ENCODE measurements at regions of chr1 and their contacts with region 1.

Region 1: DNA sequence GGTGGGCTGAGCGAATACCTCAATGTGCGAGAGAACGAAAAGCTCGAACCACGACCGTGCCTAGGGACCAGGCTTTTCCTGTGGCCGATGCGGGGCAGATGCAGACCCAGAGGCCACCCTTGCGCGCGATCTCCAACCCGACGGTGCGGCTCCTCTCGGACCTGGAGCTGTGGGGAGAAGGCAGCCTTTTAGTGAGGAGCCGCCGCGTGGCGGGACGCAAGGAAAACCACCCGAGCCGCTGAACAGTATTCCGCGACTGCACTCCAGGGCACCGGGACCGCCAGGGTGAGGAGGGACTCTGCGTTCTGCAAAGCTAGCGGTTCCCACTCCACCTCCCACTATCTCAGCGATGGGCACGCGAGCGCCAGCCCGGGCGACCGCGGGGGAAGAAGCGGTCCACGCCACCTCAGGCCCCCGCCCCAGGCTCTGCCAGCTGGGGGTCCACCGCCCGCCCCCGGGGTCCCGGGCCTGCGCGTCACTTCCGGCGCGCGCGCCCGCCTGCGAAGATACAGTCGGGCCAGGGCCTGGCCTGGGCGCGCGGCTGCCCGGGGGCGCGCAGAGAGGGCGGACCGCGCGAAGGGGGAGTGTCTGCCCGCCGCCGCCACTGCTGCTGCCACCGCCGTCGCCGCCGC is 66.5 kb upstream of the PRKACB start:
- DNase-seq: peak; percentile 75
- ATAC-seq: peak; percentile 91
- H3K4me3 Mint-ChIP-seq: peak overlapping the region; percentile 79
- H3K27ac Mint-ChIP-seq: peak overlapping the region; percentile 85
- H3K4me1 Mint-ChIP-seq: peaks cover 15% of the 10 kb centered on the region
- H3K27me3 Mint-ChIP-seq: no peaks in the 10 kb centered on the region

Region 2: GRCh38 chr1:83787246-83787998 is 290.2 kb before region 1 on chr1:
- CTCF ChIA-PET with region 1: no interaction called
- POLR2A ChIA-PET with region 1: no interaction called
- DNase-seq: no peak
- ATAC-seq: no peak
- H3K4me3 Mint-ChIP-seq: no peak overlapping the region
- H3K27ac Mint-ChIP-seq: no peak overlapping the region
- H3K4me1 Mint-ChIP-seq: no peaks in the 10 kb centered on the region
- H3K27me3 Mint-ChIP-seq: no peaks in the 10 kb centered on the region

Region 3: DNA sequence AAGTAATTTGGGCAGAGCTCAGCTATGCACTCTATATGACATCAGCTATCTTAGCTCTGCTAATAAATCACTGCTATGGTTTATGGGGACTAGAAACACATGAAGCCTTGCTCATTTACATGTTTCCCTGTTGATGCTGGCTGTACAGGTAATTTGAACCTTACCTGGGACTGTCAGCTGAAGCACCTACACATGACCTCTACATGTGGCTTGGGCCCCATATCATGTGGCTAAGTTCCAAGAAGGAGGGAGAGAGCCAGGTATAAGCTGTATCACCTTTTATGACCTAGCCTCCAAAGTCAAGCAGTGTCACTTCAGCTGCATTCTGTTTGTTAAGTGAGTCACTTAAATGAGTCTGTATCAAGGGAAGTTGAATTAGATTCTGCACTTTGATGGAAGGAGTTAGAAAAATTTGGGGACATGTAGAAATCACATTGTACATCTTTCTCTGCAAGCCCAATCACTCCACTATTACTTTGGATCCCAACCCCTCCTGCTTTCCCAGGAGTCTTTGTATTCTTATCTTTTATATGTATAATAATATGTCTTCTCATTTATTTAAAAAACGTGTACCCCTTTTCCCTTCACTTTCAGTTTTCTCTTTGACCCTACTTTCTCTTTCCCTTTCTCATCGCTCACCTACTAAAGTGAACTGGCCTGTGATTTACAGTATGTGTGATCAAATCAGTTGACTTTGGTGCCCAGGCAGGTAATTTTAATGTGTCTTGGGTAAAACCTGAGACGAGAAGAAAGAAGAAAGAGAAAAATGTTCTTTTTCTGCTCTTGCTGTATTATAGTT is 13.1 kb after region 1 on chr1:
- CTCF ChIA-PET with region 1: interaction called, 6 read pairs
- POLR2A ChIA-PET with region 1: interaction called, 13 read pairs
- DNase-seq: peak; percentile 27
- ATAC-seq: peak; percentile 87
- H3K4me3 Mint-ChIP-seq: peak overlapping the region; percentile 68
- H3K27ac Mint-ChIP-seq: peak overlapping the region; percentile 75
- H3K4me1 Mint-ChIP-seq: peaks cover 14% of the 10 kb centered on the region
- H3K27me3 Mint-ChIP-seq: no peaks in the 10 kb centered on the region

Region 4: DNA sequence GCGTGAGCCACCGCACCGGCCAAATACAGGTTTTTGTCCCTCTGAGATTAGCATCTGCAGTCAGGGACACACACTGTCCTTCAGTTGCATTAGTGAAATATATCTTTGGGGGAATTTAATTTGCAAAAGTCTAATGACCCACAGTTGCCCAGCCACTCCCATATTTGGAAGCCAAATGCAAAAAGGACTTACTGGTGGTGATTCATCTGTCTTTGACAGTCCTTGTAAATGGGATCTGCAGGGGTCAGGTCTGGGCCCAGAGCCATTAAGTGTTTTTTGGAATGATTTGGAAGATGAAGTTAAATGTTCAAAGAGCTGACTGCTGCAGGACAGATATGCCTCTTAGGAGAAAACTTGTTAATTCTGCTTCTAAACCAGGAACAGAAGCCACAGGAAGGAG is 276.1 kb after region 1 on chr1:
- CTCF ChIA-PET with region 1: no interaction called
- POLR2A ChIA-PET with region 1: no interaction called
- DNase-seq: no peak
- ATAC-seq: no peak
- H3K4me3 Mint-ChIP-seq: no peak overlapping the region
- H3K27ac Mint-ChIP-seq: no peak overlapping the region
- H3K4me1 Mint-ChIP-seq: no peaks in the 10 kb centered on the region
- H3K27me3 Mint-ChIP-seq: no peaks in the 10 kb centered on the region